IMR-90 (cell line): ENCODE measurements at regions of chr4 and their contacts with region 1.

Region 1: DNA sequence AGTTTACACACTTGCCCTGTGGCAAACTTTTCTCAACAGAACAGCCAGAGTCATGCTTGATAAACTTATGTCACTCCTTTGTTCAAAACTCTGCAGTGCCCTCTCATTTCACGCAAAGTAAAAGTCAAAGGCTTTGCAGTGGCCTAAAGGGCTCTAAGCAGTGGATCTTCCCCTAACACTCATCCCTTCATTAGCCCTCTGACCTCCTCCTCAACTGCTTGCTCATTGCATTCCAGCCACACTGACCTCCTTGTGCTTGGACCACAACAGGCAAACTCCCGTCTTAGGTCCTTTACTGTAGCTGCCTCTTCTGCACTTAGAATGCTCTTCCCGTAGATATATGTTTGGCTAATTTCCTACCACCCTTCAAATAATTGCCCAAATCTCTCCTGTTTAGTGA is 5.6 kb downstream of the PRDM5 start:
- DNase-seq: peak; percentile 31
- ATAC-seq: peak; percentile 34; the same call in 1 of the 2 replicates
- H3K4me3 ChIP-seq: no peak overlapping the region
- H3K27ac ChIP-seq: no peak overlapping the region
- H3K4me1 ChIP-seq: peaks cover 2% of the 10 kb centered on the region; the same call in 1 of the 2 replicates
- H3K27me3 ChIP-seq: no peaks in the 10 kb centered on the region
- CTCF ChIP-seq: no peak
- POLR2A ChIP-seq: no peak
- RAD21 ChIP-seq: no peak

Region 2: GRCh38 chr4:120902925-120903324 is 14.0 kb before region 1 on chr4:
- CTCF ChIA-PET with region 1: no interaction called
- POLR2A ChIA-PET with region 1: no interaction called
- dilution Hi-C with region 1: no loop called
- in situ Hi-C with region 1: no loop called
- intact Hi-C with region 1: loop called (anchors 1 kb)
- DNase-seq: no peak
- ATAC-seq: no peak
- H3K4me3 ChIP-seq: no peak overlapping the region
- H3K27ac ChIP-seq: no peak overlapping the region
- H3K4me1 ChIP-seq: no peaks in the 10 kb centered on the region
- H3K27me3 ChIP-seq: no peaks in the 10 kb centered on the region
- CTCF ChIP-seq: no peak
- POLR2A ChIP-seq: no peak
- RAD21 ChIP-seq: no peak

Region 3: GRCh38 chr4:121112530-121112929 is 195.6 kb after region 1 on chr4:
- CTCF ChIA-PET with region 1: no interaction called
- POLR2A ChIA-PET with region 1: no interaction called
- dilution Hi-C with region 1: no loop called
- in situ Hi-C with region 1: no loop called
- intact Hi-C with region 1: no loop called
- DNase-seq: no peak
- ATAC-seq: no peak
- H3K4me3 ChIP-seq: no peak overlapping the region
- H3K27ac ChIP-seq: no peak overlapping the region
- H3K4me1 ChIP-seq: no peaks in the 10 kb centered on the region
- H3K27me3 ChIP-seq: peaks cover 3% of the 10 kb centered on the region; the same call in 1 of the 2 replicates
- CTCF ChIP-seq: peak; percentile 41
- POLR2A ChIP-seq: no peak
- RAD21 ChIP-seq: no peak